ENCODE measurements at regions of chr6 and their contacts with region 1.

Region 1: GRCh38 chr6:148464319-148465010 is 121.8 kb downstream of the SASH1 start:
- DNase-seq: peak; percentile 73
- H3K4me3 Mint-ChIP-seq: no peak overlapping the region
- H3K27ac Mint-ChIP-seq: peak overlapping the region; percentile 57
- H3K4me1 Mint-ChIP-seq: peaks cover 27% of the 10 kb centered on the region
- H3K27me3 Mint-ChIP-seq: no peaks in the 10 kb centered on the region
- CTCF ChIP-seq: peak; percentile 96

Region 2: GRCh38 chr6:147733686-147734085 is 730.8 kb before region 1 on chr6:
- CTCF ChIA-PET with region 1: no interaction called
- POLR2A ChIA-PET with region 1: no interaction called
- intact Hi-C with region 1: no loop called
- DNase-seq: no peak
- H3K4me3 Mint-ChIP-seq: no peak overlapping the region
- H3K27ac Mint-ChIP-seq: no peak overlapping the region
- H3K4me1 Mint-ChIP-seq: peaks cover 5% of the 10 kb centered on the region
- H3K27me3 Mint-ChIP-seq: no peaks in the 10 kb centered on the region
- CTCF ChIP-seq: no peak

Region 3: DNA sequence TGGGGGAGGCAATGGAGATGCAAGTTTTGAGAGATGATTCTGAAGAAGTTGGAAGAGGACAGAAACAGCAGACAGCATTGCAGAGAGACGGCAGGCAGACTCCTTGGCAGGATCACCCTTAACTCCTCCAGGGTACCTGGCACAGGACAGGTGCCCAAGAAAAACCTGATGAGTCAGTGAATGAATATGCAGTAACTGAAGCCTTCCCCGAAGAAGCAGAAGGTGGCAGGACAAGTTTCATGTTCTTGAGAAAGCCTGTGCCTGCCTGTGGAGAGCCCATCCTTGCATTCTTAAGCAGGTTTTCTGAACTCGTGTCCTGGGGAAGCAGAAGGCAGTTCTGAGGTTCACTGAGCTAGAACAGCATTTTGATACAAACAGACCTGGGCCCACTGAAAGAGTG is 201.5 kb before region 1 on chr6:
- CTCF ChIA-PET with region 1: interaction called, 10 read pairs
- POLR2A ChIA-PET with region 1: interaction called, 4 read pairs
- intact Hi-C with region 1: no loop called
- DNase-seq: peak; percentile 77
- H3K4me3 Mint-ChIP-seq: no peak overlapping the region
- H3K27ac Mint-ChIP-seq: no peak overlapping the region
- H3K4me1 Mint-ChIP-seq: peaks cover 24% of the 10 kb centered on the region
- H3K27me3 Mint-ChIP-seq: no peaks in the 10 kb centered on the region
- CTCF ChIP-seq: no peak

Region 4: GRCh38 chr6:148293181-148293995 is 171.1 kb before region 1 on chr6:
- CTCF ChIA-PET with region 1: no interaction called
- POLR2A ChIA-PET with region 1: no interaction called
- intact Hi-C with region 1: no loop called
- DNase-seq: no peak
- H3K4me3 Mint-ChIP-seq: no peak overlapping the region
- H3K27ac Mint-ChIP-seq: no peak overlapping the region
- H3K4me1 Mint-ChIP-seq: no peaks in the 10 kb centered on the region
- H3K27me3 Mint-ChIP-seq: no peaks in the 10 kb centered on the region
- CTCF ChIP-seq: no peak